K562 (cell line): ENCODE measurements at regions of chr18 and their contacts with region 1.

Region 1: DNA sequence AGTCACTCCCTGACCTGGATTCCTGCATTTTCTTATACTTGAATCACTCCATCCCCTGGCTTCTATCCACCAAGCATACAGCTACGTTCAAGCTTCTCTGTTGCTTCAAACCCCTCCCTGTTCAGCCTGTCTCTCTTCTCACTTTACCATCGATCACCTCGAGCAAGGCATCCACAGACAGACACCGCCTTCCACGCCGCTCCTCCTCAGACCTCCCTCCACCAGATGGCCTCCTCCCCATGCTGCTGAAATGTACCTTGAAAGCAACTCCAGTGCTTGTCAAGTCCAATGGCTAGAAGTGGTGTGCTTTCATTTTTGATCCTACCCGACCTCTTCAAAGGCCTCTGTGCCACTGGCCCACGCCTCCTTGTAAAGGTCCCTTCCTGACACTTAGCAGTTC is 131.3 kb upstream of the ACAA2 start:
- DNase-seq: peak in 2 of 4 experiments; percentile 5 to 7
- ATAC-seq: peak; percentile 69
- H3K4me3 ChIP-seq: no peak overlapping the region
- H3K27ac ChIP-seq: no peak overlapping the region
- H3K4me1 ChIP-seq: no peaks in the 10 kb centered on the region
- H3K27me3 ChIP-seq: peaks cover 0 to 11% of the 10 kb centered on the region in 2 experiments; a peak in 3 of 5 replicates
- CTCF ChIP-seq: peak in 2 of 3 experiments; percentile 27 to 37; a peak in 2 of 6 replicates
- EP300 ChIP-seq: no peak
- POLR2A ChIP-seq: no peak
- RAD21 ChIP-seq: peak; percentile 17 to 42; a peak in 3 of 4 replicates

Region 2: GRCh38 chr18:49839012-49839411 is 105.7 kb before region 1 on chr18:
- CTCF ChIA-PET with region 1: no interaction called
- POLR2A ChIA-PET with region 1: no interaction called
- in situ Hi-C with region 1: no loop called
- intact Hi-C with region 1: no loop called
- DNase-seq: no peak
- ATAC-seq: no peak
- H3K4me3 ChIP-seq: no peak overlapping the region
- H3K27ac ChIP-seq: no peak overlapping the region
- H3K4me1 ChIP-seq: no peaks in the 10 kb centered on the region
- H3K27me3 ChIP-seq: peaks cover 0 to 7% of the 10 kb centered on the region in 2 experiments; a peak in 3 of 5 replicates
- CTCF ChIP-seq: no peak
- EP300 ChIP-seq: no peak
- POLR2A ChIP-seq: no peak
- RAD21 ChIP-seq: no peak

Region 3: DNA sequence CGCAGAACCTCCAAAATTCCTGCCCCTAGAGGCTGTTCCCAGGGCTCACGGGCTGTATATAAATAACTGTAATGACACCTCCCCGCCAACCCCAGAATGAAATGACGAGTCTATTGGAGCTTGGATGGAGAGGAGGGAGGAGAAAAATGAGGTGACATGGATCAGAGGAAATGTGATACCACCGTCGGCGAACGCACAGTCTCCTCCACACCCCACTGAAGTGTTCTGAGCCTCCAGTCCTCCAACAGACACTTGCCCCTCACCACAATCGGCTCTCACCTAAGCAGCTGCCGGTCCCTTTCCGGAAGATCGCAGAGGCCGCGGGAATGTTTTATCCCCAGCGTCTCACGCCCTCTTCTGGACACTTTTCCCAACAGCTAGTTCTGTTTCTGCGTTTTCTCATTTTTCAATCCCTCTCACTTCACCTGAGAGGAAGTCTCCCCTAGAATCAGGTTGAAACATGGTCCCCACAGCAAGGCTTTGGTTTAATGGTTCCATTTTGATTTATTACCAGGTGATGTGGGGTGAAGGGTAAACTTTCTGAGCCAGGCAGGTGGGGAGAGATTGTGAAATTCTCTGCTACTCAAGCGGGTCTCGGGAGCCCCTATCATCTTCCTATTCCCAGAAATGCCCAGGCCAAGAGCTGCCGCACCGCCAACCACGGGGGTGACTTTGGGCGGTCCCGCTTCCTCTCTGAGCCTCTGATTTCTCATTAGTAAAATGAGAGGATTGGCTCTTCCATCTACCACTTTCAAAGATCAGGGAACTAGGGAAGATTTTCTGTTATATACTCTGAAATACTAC is 259.3 kb after region 1 on chr18:
- CTCF ChIA-PET with region 1: no interaction called
- POLR2A ChIA-PET with region 1: no interaction called
- in situ Hi-C with region 1: no loop called
- intact Hi-C with region 1: loop called (anchors 10 kb)
- DNase-seq: peak; percentile 9 to 60 (median 24)
- ATAC-seq: peak; percentile 84
- H3K4me3 ChIP-seq: no peak overlapping the region
- H3K27ac ChIP-seq: no peak overlapping the region
- H3K4me1 ChIP-seq: no peaks in the 10 kb centered on the region; a peak in 1 of 5 replicates
- H3K27me3 ChIP-seq: peaks cover 4 to 12% of the 10 kb centered on the region in 2 experiments; a peak in 3 of 5 replicates
- CTCF ChIP-seq: peak; percentile 53 to 64 (median 62)
- EP300 ChIP-seq: no peak
- POLR2A ChIP-seq: no peak
- RAD21 ChIP-seq: peak; percentile 28 to 65; a peak in 3 of 4 replicates